ENCODE measurements at regions of chr2 and their contacts with region 1.

Region 1: GRCh38 chr2:224401641-224402342 is at the start of gene FAM124B:
- DNase-seq: peak; percentile 99
- H3K4me3 ChIP-seq: peak within 1 kb of the TSS; percentile 33 to 90 (median 75)
- H3K27ac ChIP-seq: peak within 1 kb of the TSS; percentile 98
- H3K4me1 ChIP-seq: peaks cover 28% of the 10 kb centered on the region
- H3K27me3 ChIP-seq: no peaks in the 10 kb centered on the region
- CTCF ChIP-seq: no peak
- POLR2A ChIP-seq: peak; percentile 96
- total RNA-seq, gene FAM124B: 81.4 and 82.0 TPM in 2 replicates

Region 2: GRCh38 chr2:223697892-223698645 is 703.7 kb before region 1 on chr2:
- CTCF ChIA-PET with region 1: no interaction called
- POLR2A ChIA-PET with region 1: no interaction called
- dilution Hi-C with region 1: no loop called
- intact Hi-C with region 1: loop called (anchors 2 kb)
- DNase-seq: peak; percentile 18
- H3K4me3 ChIP-seq: no peak overlapping the region
- H3K27ac ChIP-seq: peak overlapping the region; percentile 87
- H3K4me1 ChIP-seq: peaks cover 38% of the 10 kb centered on the region
- H3K27me3 ChIP-seq: no peaks in the 10 kb centered on the region
- CTCF ChIP-seq: no peak
- POLR2A ChIP-seq: no peak

Region 3: GRCh38 chr2:224221455-224221913 is 180.3 kb before region 1 on chr2:
- CTCF ChIA-PET with region 1: no interaction called
- POLR2A ChIA-PET with region 1: no interaction called
- dilution Hi-C with region 1: no loop called
- intact Hi-C with region 1: loop called (anchors 5 kb)
- DNase-seq: peak; percentile 88
- H3K4me3 ChIP-seq: no peak overlapping the region
- H3K27ac ChIP-seq: peak overlapping the region; percentile 99
- H3K4me1 ChIP-seq: peaks cover 26% of the 10 kb centered on the region
- H3K27me3 ChIP-seq: no peaks in the 10 kb centered on the region
- CTCF ChIP-seq: no peak
- POLR2A ChIP-seq: no peak

Region 4: DNA sequence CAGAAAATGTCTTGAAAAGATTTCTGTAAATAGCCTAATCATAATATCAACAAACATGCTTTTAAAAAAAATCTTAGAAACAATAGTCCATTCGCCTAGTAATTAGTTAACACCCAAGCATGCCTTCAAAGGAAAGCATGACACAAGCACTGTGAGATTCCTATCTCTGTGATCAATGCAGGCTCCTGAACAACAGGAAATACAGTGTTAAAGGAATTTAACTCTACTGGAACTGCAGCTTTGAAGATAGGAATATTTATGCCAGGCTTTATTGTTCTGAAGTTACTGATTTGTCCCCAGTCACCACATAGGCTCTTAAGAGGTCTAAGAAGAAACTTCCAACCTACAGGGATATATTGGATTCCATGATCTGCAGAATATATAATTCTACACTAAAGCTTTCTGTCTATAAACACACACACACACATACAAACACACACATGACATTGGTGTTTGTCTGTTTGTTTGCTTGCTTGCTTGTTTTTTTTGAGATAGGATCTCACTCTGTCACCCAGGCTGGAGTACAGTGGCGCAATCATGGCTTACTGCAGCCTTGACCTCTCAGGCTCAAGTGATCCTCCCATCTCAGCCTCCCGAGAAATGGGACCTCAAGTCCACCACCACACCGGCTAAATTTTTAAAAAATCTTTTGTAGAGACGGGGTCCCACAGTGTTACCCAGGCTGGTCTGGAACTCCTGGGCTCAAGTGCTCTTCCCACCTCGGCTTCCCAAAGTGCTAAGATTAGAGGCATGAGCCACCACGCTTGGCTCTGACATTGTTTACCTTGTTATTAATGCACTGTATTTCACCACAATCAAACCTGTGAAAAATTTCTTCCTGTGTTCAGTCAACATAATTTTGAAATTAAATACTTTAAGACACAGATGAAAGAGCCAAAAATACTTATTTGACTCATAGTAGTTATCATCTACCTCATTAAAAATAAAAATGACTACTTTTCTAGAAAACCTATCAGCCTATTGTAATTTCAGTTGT is 15.9 kb after region 1 on chr2:
- CTCF ChIA-PET with region 1: interaction called, 4 read pairs
- POLR2A ChIA-PET with region 1: interaction called, 15 read pairs
- dilution Hi-C with region 1: no loop called
- intact Hi-C with region 1: loop called (anchors 1 kb)
- DNase-seq: peak; percentile 94
- H3K4me3 ChIP-seq: no peak overlapping the region
- H3K27ac ChIP-seq: peak overlapping the region; percentile 89
- H3K4me1 ChIP-seq: peaks cover 19% of the 10 kb centered on the region
- H3K27me3 ChIP-seq: no peaks in the 10 kb centered on the region
- CTCF ChIP-seq: no peak
- POLR2A ChIP-seq: no peak

Region 5: DNA sequence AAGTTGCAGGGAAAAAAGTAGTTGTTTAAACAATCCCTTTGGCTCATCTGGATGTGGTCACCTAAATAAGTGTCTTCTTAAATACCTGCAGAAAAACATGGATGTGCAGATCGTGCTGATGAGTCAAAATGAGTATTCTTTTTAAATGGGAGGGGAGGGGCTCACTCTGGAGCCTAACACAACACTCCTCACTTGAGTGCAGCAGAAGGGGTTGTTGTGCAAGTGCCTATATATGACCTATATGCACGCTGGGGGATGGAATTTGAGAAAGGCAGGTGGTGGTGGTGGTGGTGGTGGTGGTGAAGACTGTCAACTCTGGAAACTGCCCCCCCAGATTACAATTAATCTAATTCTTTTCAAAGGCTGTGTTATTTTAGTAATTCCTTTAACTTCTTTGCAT is 78.0 kb after region 1 on chr2:
- CTCF ChIA-PET with region 1: no interaction called
- POLR2A ChIA-PET with region 1: no interaction called
- dilution Hi-C with region 1: no loop called
- intact Hi-C with region 1: loop called (anchors 1 kb)
- DNase-seq: no peak
- H3K4me3 ChIP-seq: no peak overlapping the region
- H3K27ac ChIP-seq: no peak overlapping the region
- H3K4me1 ChIP-seq: peaks cover 2% of the 10 kb centered on the region
- H3K27me3 ChIP-seq: no peaks in the 10 kb centered on the region
- CTCF ChIP-seq: no peak
- POLR2A ChIP-seq: no peak